Posterior vena cava (tissue), 2 donors: ENCODE measurements at regions of chrX and their contacts with region 1.

Region 1: DNA sequence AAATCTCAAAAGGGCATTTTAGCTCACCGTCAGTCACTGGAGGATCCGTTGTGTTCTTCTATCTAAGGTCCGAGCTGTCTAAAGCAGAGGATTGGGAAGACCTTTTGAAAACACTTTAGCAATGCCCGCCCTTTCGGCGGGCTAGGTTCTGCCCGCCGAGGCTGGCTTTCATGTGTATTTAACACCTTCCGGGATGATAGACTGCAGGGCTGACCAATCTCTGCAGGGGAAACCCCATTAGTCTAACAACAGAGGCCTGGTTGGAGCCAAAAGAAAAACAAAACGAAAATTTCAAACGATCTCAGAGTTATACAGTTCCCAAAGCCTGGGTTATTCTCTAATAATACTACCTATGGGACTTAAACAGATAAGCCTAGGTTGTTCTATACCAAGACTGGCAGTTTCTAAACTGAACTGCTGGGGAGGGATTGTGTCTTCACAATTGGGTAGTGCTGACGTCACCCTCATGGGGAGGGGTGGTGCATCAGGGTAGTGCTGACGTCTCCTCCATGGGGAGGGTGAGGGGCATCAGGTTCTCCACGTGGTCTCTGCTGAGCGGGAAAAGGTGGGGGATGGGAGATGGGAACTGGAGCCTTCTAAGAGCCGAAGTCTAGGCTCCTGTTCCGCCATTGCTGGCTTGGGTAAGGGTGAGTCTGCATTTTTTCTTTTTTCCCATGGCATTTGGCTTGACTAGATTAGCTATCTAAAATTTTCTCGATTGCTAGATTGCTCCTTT is 14.8 kb upstream of the CUL4B start:
- DNase-seq: no peak

Region 2: GRCh38 chrX:120549483-120550452 is 25.8 kb before region 1 on chrX:
- intact Hi-C with region 1: loop called in 1 of 2 experiments (anchors 2 kb)
- DNase-seq: no peak

Region 3: GRCh38 chrX:120629667-120630537 is 54.4 kb after region 1 on chrX and contains the start of gene C1GALT1C1:
- intact Hi-C with region 1: no loop called
- DNase-seq: peak; percentile 97
- total RNA-seq, gene C1GALT1C1: 24.7 to 29.4 TPM